ENCODE measurements at regions of chr14 and their contacts with region 1.

Region 1: DNA sequence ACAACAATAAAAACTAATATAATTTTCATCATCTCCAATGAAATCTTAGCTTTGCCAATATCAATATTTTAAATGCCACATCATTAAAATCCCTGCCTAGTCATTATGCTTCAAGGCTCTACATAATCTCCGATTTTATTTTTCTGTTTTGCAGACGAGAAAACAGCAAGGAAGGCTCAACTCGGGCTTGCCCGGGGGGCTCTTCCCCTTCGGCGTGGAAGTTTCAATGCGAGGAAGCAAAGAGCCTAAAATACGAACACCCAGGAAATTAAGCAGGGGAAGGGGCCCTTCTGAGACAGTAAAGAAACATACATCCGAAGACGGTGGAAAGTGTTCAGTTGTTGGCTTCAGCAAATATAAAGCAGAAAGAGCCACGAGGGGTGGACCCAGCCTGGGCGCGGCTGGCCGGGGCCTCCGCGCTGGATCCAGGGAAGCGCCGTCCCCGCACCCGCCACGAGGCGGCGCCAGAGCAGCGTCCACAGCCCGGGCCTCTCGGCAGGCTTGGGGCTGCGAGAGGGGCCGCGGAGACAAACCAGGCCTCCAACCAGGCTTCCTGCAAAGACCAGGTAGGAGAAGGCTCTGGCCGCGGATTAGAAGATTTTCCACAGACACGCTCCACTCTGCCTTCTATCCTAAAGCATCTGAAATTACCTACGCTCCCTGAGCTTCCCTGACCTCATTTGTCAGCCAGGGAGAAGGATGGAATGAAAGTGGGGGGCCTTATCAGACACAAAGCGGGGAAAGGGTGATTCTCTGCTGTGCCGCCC is 77.2 kb downstream of the SERPINA3 start:
- DNase-seq: no peak
- ATAC-seq: peak; percentile 95
- H3K4me3 ChIP-seq: peak overlapping the region in 1 of 2 experiments; percentile 14; a peak in 1 of 4 replicates
- H3K27ac ChIP-seq: no peak overlapping the region
- H3K4me1 ChIP-seq: no peaks in the 10 kb centered on the region
- H3K27me3 ChIP-seq: no peaks in the 10 kb centered on the region
- CTCF ChIP-seq: peak; percentile 97

Region 2: DNA sequence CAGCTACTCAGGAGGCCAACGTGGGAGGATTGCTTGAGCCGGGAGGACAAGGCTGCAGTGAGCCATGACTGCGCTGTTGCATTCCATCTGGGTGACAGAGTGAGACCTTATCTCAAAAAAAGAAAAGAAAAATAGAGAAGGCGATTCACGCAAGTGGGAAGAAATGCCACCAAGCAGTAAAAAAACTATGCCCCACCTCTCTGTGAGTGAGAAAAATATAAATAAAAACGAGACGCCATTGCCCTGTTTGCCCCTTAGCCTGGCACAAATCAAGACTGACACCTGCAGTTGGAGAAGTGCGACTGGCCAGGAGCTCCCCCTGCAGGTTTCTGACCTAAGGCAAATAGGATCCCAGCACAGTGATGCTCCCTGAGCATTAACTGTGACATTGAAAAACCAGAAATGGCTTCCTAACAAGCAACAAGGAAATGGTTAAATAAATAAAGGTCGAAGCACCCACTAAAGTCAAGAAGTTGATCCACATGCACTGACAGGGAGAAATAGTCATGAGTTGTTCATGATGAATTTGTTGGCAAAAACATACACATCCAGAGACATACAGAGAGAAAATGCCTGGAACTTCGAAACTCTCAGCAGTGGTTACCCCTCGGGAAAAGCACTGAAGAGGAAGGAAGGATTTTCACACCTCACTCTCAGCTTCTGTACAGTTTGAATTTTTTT is 59.4 kb after region 1 on chr14:
- CTCF ChIA-PET with region 1: interaction called, 4 read pairs
- POLR2A ChIA-PET with region 1: no interaction called
- in situ Hi-C with region 1: no loop called
- intact Hi-C with region 1: loop called (anchors 2 kb)
- DNase-seq: peak; percentile 22
- ATAC-seq: peak; percentile 95
- H3K4me3 ChIP-seq: no peak overlapping the region
- H3K27ac ChIP-seq: no peak overlapping the region
- H3K4me1 ChIP-seq: no peaks in the 10 kb centered on the region
- H3K27me3 ChIP-seq: no peaks in the 10 kb centered on the region; the same call in 1 of the 2 replicates
- CTCF ChIP-seq: peak; percentile 85

Region 3: GRCh38 chr14:95098984-95099599 is 409.7 kb after region 1 on chr14:
- CTCF ChIA-PET with region 1: no interaction called
- POLR2A ChIA-PET with region 1: no interaction called
- in situ Hi-C with region 1: no loop called
- intact Hi-C with region 1: loop called (anchors 1 kb)
- DNase-seq: peak; percentile 22
- ATAC-seq: peak; percentile 88
- H3K4me3 ChIP-seq: no peak overlapping the region
- H3K27ac ChIP-seq: no peak overlapping the region
- H3K4me1 ChIP-seq: no peaks in the 10 kb centered on the region
- H3K27me3 ChIP-seq: no peaks in the 10 kb centered on the region
- CTCF ChIP-seq: peak; percentile 78

Region 4: DNA sequence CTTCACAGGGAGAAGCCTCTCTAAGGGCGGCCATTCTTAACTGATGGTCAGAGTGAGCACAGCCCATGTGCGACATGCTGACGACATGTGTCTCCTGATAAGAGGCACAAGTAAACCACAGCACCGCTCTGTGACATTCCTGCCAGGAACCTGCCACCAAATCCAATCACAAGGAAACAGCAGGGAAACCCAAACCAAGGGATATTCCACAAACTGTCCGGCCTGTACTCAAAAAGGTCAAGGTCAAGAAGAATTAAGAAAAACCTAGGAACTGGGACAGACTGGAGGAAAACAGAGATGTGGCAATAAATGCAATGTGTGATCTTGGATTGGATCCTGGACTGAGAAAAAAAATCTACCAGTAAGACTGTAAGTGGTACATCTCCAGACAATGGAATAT is 735.1 kb after region 1 on chr14:
- CTCF ChIA-PET with region 1: no interaction called
- POLR2A ChIA-PET with region 1: no interaction called
- in situ Hi-C with region 1: no loop called
- intact Hi-C with region 1: loop called (anchors 10 kb)
- DNase-seq: no peak
- ATAC-seq: no peak
- H3K4me3 ChIP-seq: no peak overlapping the region
- H3K27ac ChIP-seq: no peak overlapping the region
- H3K4me1 ChIP-seq: no peaks in the 10 kb centered on the region
- H3K27me3 ChIP-seq: no peaks in the 10 kb centered on the region
- CTCF ChIP-seq: no peak

Measured in Panc1 (cell line).